ENCODE measurements at regions of chr9 and their contacts with region 1.

Region 1: GRCh38 chr9:24776226-24776625 is 230.5 kb upstream of the IZUMO3 start:
- DNase-seq: no peak
- H3K4me3 ChIP-seq: no peak overlapping the region
- H3K27ac ChIP-seq: no peak overlapping the region
- H3K4me1 ChIP-seq: no peaks in the 10 kb centered on the region
- H3K27me3 ChIP-seq: no peaks in the 10 kb centered on the region
- CTCF ChIP-seq: no peak
- POLR2A ChIP-seq: no peak

Region 2: GRCh38 chr9:24333629-24334028 is 442.6 kb before region 1 on chr9:
- intact Hi-C with region 1: loop called (anchors 5 kb)
- DNase-seq: no peak
- H3K4me3 ChIP-seq: no peak overlapping the region
- H3K27ac ChIP-seq: no peak overlapping the region
- H3K4me1 ChIP-seq: no peaks in the 10 kb centered on the region
- H3K27me3 ChIP-seq: no peaks in the 10 kb centered on the region
- CTCF ChIP-seq: no peak
- POLR2A ChIP-seq: no peak